OCI-LY7 (cell line): ENCODE measurements at regions of chr5 and their contacts with region 1.

Region 1: DNA sequence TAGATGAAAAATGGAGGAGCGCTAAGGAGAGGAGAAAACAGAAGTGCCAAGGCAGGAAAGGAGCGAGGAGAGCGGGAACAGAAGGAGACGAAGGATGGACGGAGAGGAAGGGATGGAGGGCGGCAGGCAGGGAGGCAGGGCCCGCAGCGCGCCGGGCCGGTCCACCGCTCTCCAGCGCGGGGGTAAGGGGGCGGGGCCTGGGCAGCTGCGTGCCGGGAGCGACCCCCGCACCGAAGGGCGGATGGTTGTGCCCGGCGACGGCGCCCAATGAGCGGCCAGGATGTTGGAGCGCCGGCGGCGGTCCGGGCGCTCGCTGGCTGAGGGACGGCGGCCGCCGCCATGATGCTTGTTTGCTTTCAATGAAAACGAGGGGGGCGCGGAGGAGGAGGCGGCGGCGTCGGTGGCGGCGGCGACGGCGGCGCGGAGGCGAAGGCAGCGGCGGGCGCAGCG is at the start of gene CNOT6:
- DNase-seq: peak; percentile 94
- H3K4me3 ChIP-seq: peak within 1 kb of the TSS; percentile 87
- H3K27ac ChIP-seq: peak within 1 kb of the TSS; percentile 66
- H3K4me1 ChIP-seq: peaks cover 14% of the 10 kb centered on the region
- CTCF ChIP-seq: no peak
- total RNA-seq, gene CNOT6: 9.4 and 9.8 TPM in 2 replicates

Region 2: DNA sequence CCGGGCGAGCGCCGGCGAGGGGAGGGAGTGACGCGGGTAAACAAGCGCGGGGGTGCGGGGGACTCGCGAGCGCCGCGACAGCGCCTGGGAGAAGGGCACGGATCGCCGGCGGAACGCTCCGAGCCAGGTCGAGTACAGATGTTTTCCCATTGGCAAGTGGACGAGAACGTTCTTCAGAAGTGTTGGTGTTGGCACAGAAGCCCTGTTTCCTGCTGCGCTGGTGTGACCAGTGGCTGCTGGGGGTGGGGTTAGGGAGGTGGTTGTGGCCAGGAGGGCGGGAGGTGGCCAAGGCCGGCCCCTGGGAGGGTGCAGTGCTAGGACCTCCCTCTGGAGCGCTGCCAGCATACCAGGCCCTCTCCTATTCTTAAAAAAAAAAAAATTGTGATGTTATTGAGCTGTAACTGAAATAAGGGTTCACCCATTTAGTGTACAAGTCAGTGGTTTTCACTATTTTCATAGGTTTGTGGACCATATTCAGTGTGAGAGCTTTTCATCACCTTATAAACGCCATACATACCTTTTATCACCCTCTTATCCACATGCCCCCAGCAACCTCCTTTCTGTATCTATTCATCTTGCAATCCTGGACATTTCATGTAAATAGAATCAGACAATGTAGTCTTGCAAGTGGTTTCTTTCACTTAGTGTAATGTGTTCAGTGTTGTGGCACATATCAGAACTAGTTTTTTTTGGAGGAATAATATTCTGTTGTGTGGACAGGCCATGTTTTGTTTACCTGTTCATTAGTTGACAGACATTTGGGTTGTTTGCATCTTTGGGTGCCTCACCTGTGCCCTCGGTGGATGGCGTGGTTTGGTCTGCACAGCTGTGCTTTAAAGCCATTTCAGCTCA is 672.3 kb before region 1 on chr5:
- CTCF ChIA-PET with region 1: no interaction called
- POLR2A ChIA-PET with region 1: no interaction called
- intact Hi-C with region 1: loop called (anchors 10 kb)
- DNase-seq: peak; percentile 80
- H3K4me3 ChIP-seq: peak overlapping the region; percentile 99
- H3K27ac ChIP-seq: peak overlapping the region; percentile 59
- H3K4me1 ChIP-seq: peaks cover 32% of the 10 kb centered on the region
- CTCF ChIP-seq: 0 out of 2 replicates have a peak, but pooled peaks have one; percentile 10

Region 3: GRCh38 chr5:180605554-180606214 is 111.6 kb after region 1 on chr5:
- CTCF ChIA-PET with region 1: no interaction called
- POLR2A ChIA-PET with region 1: no interaction called
- intact Hi-C with region 1: loop called (anchors 5 kb)
- DNase-seq: peak; percentile 67
- H3K4me3 ChIP-seq: no peak overlapping the region
- H3K27ac ChIP-seq: no peak overlapping the region
- H3K4me1 ChIP-seq: no peaks in the 10 kb centered on the region
- CTCF ChIP-seq: peak; percentile 90